ENCODE measurements at regions of chr12 and their contacts with region 1.

Region 1: GRCh38 chr12:32918890-32919801 is 22.6 kb upstream of the PKP2 start:
- DNase-seq: peak; percentile 27
- ATAC-seq: no peak
- H3K4me3 ChIP-seq: no peak overlapping the region
- H3K27ac ChIP-seq: no peak overlapping the region
- H3K4me1 ChIP-seq: no peaks in the 10 kb centered on the region
- H3K27me3 ChIP-seq: no peaks in the 10 kb centered on the region
- CTCF ChIP-seq: peak; percentile 35
- POLR2A ChIP-seq: no peak
- RAD21 ChIP-seq: peak; percentile 10; the same call in 1 of the 2 replicates

Region 2: DNA sequence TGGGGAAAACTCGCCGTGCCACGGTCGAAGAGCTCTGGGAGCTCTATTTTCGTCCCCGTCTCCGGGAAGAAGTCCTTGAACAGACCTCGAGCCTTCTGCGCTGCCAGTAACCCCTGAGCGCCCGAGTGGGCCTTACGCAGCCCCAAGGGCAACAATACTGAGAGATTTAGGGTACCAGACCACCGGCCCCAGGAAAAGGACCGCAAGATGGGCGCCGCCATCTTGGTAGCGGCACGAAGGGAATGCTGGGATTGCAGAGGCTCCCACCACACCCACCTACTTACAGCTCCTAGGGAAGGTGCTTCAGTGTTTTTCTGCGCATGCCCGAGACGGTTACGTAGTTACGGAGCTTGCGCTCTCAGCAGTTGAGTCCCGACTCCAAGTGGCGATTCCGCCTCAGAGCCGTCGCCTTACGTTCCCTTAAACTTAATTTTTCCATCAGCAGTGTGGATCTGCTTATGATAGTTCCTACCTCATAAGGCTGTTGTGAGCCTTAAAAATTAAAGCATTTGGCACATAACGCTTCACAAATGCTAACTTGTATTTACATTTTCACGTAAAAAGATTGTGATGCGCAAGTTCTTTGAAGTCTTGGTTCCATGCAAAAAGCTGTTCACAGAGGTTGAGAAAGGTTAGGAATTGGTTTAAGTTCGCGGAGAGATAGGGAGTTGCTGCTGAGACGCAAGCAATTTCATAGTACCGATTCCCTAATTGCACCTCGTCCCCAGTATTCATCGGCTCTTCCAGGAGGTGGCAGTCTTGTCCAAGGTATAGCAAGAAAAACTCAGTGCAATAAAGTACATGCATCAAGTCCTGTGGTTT is 163.3 kb before region 1 on chr12 and contains the start of gene YARS2:
- CTCF ChIA-PET with region 1: no interaction called
- POLR2A ChIA-PET with region 1: no interaction called
- dilution Hi-C with region 1: no loop called
- in situ Hi-C with region 1: no loop called
- intact Hi-C with region 1: loop called (anchors 1 kb)
- DNase-seq: peak; percentile 99
- ATAC-seq: peak; percentile 96
- H3K4me3 ChIP-seq: peak within 1 kb of the TSS; percentile 76
- H3K27ac ChIP-seq: peak within 1 kb of the TSS; percentile 78
- H3K4me1 ChIP-seq: peaks cover 5% of the 10 kb centered on the region; the same call in 1 of the 2 replicates
- H3K27me3 ChIP-seq: no peaks in the 10 kb centered on the region
- CTCF ChIP-seq: peak; percentile 92
- POLR2A ChIP-seq: peak; percentile 95
- RAD21 ChIP-seq: peak; percentile 93
- total RNA-seq, gene YARS2: 21.9 and 26.9 TPM in 2 replicates

Region 3: GRCh38 chr12:33357158-33357557 is 438.0 kb after region 1 on chr12:
- CTCF ChIA-PET with region 1: no interaction called
- POLR2A ChIA-PET with region 1: no interaction called
- dilution Hi-C with region 1: no loop called
- in situ Hi-C with region 1: no loop called
- intact Hi-C with region 1: no loop called
- DNase-seq: no peak
- ATAC-seq: no peak
- H3K4me3 ChIP-seq: no peak overlapping the region
- H3K27ac ChIP-seq: no peak overlapping the region
- H3K4me1 ChIP-seq: no peaks in the 10 kb centered on the region
- H3K27me3 ChIP-seq: no peaks in the 10 kb centered on the region
- CTCF ChIP-seq: no peak
- POLR2A ChIP-seq: no peak
- RAD21 ChIP-seq: no peak